ENCODE measurements at regions of chr6 and their contacts with region 1.

Region 1: DNA sequence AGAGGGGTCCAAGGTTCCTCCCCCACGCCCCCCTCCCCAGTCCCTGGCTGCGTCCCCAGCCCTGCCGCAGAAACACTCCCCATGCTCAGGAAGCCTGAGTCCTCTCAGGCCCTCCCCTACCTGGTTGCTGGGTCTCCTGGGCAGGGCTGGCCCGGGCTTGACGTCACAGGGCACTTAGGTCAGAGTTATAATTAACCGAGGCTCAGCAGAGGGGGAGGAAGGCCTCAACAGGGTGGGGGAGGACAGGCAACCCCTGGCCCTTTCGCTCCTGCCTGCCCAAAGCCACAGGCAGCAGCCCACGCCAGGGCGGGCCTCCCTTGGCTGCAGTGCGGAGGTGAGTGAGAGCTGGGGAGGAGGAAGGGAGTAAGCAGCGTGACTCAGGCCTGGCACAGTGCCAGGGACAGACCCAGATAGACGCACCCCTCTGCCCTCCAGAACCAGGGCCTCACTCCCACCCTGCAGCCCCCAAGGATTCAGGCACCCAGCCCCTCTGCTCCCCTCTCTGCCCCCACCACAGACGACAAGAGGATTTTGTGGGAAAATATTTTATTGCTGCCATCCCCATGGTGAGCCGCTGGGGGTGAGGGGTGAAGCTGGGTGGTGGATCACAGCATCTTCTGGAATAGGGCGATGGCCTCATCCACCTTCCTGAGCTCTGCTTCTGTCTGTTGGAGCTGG is at the start of gene VWA7:
- DNase-seq: peak; percentile 91
- H3K4me3 ChIP-seq: peak within 1 kb of the TSS in 2 of 3 experiments; percentile 3 to 26
- H3K27ac ChIP-seq: peak within 1 kb of the TSS; percentile 44
- H3K4me1 ChIP-seq: peaks cover 26% of the 10 kb centered on the region
- H3K27me3 ChIP-seq: no peaks in the 10 kb centered on the region
- CTCF ChIP-seq: no peak
- total RNA-seq, gene VWA7: 1.2 to 1.5 TPM

Region 2: GRCh38 chr6:31862344-31863227 is 85.5 kb after region 1 on chr6 and contains the start of gene NEU1:
- CTCF ChIA-PET with region 1: no interaction called
- dilution Hi-C with region 1: no loop called
- in situ Hi-C with region 1: no loop called
- intact Hi-C with region 1: loop called (anchors 1 kb)
- DNase-seq: peak; percentile 100
- H3K4me3 ChIP-seq: peak within 1 kb of the TSS; percentile 76 to 94 (median 86)
- H3K27ac ChIP-seq: peak within 1 kb of the TSS; percentile 50
- H3K4me1 ChIP-seq: peaks cover 10% of the 10 kb centered on the region
- H3K27me3 ChIP-seq: no peaks in the 10 kb centered on the region
- CTCF ChIP-seq: no peak
- total RNA-seq, gene NEU1: 27.8 to 42.5 TPM

Region 3: DNA sequence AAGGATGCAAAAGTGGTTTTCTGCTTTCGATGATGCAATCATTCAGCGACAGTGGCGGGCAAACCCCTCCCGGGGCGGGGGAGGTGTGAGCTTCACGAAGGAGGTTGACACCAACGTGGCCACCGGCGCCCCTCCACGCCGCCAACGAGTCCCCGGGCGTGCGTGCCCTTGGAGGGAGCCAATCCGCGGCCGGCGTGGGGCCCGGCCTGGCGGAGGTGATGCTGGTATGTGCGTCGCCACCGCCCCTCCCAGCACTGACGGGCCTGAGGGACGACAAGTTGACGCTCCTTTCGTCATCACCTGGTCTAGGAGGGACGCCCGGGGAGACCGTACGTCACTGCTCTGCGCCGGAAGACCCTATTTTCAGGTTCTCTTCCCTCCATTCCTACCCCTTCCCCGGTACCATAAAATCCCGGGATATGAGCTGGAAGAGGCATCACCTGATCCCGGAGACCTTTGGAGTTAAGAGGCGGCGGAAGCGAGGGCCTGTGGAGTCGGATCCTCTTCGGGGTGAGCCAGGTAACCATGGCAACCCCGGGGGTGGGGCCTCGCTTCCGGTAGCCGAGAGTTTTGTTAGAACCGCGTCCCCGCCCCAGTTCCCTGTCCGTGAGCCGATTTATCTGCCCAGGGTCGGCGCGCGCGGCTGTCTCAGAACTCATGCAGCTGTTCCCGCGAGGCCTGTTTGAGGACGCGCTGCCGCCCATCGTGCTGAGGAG is 195.0 kb after region 1 on chr6 and contains the start of gene DXO:
- CTCF ChIA-PET with region 1: no interaction called
- dilution Hi-C with region 1: no loop called
- in situ Hi-C with region 1: no loop called
- intact Hi-C with region 1: loop called (anchors 10 kb)
- DNase-seq: peak; percentile 99
- H3K4me3 ChIP-seq: peak within 1 kb of the TSS; percentile 61 to 80 (median 77)
- H3K27ac ChIP-seq: peak within 1 kb of the TSS; percentile 97
- H3K4me1 ChIP-seq: peaks cover 21% of the 10 kb centered on the region
- H3K27me3 ChIP-seq: no peaks in the 10 kb centered on the region
- CTCF ChIP-seq: no peak
- total RNA-seq, gene DXO: 15.7 to 24.1 TPM